Lower lobe of right lung (tissue), 2 donors: ENCODE measurements at regions of chr3 and their contacts with region 1.

Region 1: DNA sequence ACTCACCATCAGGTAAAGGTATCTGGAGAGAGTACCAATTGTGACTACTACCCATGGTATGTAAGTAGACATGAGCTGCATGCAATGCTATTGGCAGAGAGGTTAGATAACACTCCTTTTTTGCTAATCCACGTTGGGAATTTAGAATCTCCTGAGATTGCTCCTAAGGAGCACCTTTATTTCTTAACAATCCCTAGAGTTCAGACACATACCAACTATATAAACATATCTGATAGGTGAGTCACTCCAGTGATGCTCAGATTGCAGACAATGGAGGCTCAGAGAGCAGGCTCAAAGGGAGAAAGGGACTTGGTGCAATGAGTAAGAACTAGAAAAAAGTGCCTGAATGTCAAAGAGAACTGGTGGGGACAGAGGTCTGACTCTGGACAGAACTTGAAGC is 47.0 kb upstream of the LRRFIP2 start:
- DNase-seq: no peak
- ATAC-seq: no peak
- H3K4me3 ChIP-seq: no peak overlapping the region
- H3K27ac ChIP-seq: no peak overlapping the region
- H3K4me1 ChIP-seq: no peaks in the 10 kb centered on the region
- H3K27me3 ChIP-seq: no peaks in the 10 kb centered on the region
- CTCF ChIP-seq: no peak

Region 2: GRCh38 chr3:37014620-37015019 is 206.8 kb before region 1 on chr3:
- intact Hi-C with region 1: loop called (anchors 10 kb)
- DNase-seq: no peak
- ATAC-seq: no peak
- H3K4me3 ChIP-seq: no peak overlapping the region
- H3K27ac ChIP-seq: no peak overlapping the region
- H3K4me1 ChIP-seq: no peaks in the 10 kb centered on the region
- H3K27me3 ChIP-seq: no peaks in the 10 kb centered on the region
- CTCF ChIP-seq: no peak

Region 3: GRCh38 chr3:37028329-37028728 is 193.1 kb before region 1 on chr3:
- intact Hi-C with region 1: no loop called
- DNase-seq: no peak
- ATAC-seq: no peak
- H3K4me3 ChIP-seq: no peak overlapping the region
- H3K27ac ChIP-seq: no peak overlapping the region
- H3K4me1 ChIP-seq: peaks cover 13% of the 10 kb centered on the region
- H3K27me3 ChIP-seq: no peaks in the 10 kb centered on the region
- CTCF ChIP-seq: no peak